ENCODE measurements at regions of chr21 and their contacts with region 1.

Region 1: DNA sequence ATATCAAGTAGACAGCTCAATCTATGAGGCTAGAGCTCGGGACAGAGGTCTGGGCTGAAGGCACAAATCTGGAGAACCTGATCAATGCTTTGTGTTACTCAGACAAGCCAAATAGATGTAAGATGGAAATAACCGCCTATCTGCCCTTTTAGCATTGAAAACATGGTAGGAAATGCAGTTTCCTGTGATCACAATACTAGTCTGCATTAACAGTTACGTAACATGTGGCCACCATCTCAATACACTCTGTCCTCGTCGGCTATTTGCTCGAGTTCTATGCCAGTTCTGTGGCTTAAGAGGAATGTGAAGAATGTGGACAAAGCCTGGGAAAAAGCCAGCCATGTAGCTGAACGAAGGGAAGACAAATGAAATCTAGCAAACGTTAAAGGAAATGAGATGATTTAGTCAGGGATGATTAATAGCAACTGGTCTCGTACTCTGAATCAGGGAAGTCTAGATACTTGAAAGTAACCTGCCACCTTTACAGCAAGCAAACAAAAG is 73.3 kb downstream of the HSF2BP start:
- DNase-seq: peak; percentile 76 to 98
- H3K4me3 ChIP-seq: no peak overlapping the region
- H3K27ac ChIP-seq: peak overlapping the region; percentile 99
- H3K4me1 ChIP-seq: peaks cover 39% of the 10 kb centered on the region
- H3K27me3 ChIP-seq: no peaks in the 10 kb centered on the region
- CTCF ChIP-seq: no peak

Region 2: GRCh38 chr21:43600642-43601402 is 14.8 kb after region 1 on chr21:
- CTCF ChIA-PET with region 1: interaction called, 3 read pairs
- POLR2A ChIA-PET with region 1: interaction called, 4 read pairs
- intact Hi-C with region 1: loop called (anchors 2 kb)
- DNase-seq: peak; percentile 41 to 83
- H3K4me3 ChIP-seq: no peak overlapping the region
- H3K27ac ChIP-seq: peak overlapping the region; percentile 82
- H3K4me1 ChIP-seq: peaks cover 65% of the 10 kb centered on the region
- H3K27me3 ChIP-seq: no peaks in the 10 kb centered on the region
- CTCF ChIP-seq: no peak

Region 3: DNA sequence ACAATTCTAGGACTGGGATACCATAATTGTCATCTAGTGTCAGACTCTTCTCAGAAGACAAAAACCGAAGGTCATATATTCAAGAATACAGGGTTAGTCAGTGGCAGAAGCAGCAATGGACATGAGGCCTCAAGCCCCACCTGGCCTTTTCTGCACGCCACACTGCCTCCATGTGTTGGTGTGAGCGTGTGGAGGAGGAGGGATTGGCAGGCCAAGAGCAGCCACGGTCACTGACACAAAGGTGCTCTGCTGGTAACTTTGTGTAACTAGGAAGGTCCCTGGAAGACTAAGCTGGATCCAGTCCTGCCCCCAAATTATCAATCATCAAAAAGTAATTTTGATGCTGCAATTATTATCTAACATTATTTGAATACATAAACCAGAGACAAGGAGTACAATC is 38.4 kb after region 1 on chr21:
- CTCF ChIA-PET with region 1: no interaction called
- POLR2A ChIA-PET with region 1: interaction called, 10 read pairs
- intact Hi-C with region 1: no loop called
- DNase-seq: no peak
- H3K4me3 ChIP-seq: no peak overlapping the region
- H3K27ac ChIP-seq: no peak overlapping the region
- H3K4me1 ChIP-seq: no peaks in the 10 kb centered on the region
- H3K27me3 ChIP-seq: no peaks in the 10 kb centered on the region
- CTCF ChIP-seq: no peak

Region 4: DNA sequence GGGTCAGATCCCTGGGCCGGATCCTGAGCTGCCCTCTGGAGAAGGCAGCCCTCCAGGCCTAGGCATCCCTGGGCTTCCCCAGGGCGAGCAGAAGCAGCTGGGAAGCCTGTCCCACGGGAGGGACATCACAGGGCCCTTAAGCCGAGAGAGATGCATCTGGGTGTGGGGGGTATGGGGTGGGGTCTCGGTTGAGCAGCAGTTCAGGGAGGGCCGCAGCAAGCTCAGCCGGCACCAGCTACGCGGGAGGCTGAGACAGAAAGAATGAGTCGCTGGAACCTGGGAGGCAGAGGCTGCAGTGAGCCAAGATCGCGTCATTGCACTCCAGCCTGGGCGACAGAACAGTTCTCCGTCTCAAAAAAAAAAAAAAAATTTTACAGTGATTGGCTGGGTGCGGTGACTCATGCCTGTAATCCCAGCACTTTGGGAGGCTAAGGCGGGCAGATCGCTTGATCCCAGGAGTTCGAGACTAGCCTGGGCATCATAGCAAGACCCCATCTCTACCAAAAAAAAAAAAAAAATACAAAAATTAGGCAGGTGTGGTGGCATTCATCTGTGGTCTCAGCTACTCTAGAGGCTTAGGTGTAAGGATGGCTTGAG is 241.1 kb after region 1 on chr21:
- CTCF ChIA-PET with region 1: no interaction called
- POLR2A ChIA-PET with region 1: no interaction called
- intact Hi-C with region 1: no loop called
- DNase-seq: peak in 1 of 2 experiments; percentile 35
- H3K4me3 ChIP-seq: no peak overlapping the region
- H3K27ac ChIP-seq: no peak overlapping the region
- H3K4me1 ChIP-seq: no peaks in the 10 kb centered on the region
- H3K27me3 ChIP-seq: peaks cover 3% of the 10 kb centered on the region; the same call in 1 of the 2 replicates
- CTCF ChIP-seq: no peak